Panc1 (cell line): ENCODE measurements at regions of chr6 and their contacts with region 1.

Region 1: DNA sequence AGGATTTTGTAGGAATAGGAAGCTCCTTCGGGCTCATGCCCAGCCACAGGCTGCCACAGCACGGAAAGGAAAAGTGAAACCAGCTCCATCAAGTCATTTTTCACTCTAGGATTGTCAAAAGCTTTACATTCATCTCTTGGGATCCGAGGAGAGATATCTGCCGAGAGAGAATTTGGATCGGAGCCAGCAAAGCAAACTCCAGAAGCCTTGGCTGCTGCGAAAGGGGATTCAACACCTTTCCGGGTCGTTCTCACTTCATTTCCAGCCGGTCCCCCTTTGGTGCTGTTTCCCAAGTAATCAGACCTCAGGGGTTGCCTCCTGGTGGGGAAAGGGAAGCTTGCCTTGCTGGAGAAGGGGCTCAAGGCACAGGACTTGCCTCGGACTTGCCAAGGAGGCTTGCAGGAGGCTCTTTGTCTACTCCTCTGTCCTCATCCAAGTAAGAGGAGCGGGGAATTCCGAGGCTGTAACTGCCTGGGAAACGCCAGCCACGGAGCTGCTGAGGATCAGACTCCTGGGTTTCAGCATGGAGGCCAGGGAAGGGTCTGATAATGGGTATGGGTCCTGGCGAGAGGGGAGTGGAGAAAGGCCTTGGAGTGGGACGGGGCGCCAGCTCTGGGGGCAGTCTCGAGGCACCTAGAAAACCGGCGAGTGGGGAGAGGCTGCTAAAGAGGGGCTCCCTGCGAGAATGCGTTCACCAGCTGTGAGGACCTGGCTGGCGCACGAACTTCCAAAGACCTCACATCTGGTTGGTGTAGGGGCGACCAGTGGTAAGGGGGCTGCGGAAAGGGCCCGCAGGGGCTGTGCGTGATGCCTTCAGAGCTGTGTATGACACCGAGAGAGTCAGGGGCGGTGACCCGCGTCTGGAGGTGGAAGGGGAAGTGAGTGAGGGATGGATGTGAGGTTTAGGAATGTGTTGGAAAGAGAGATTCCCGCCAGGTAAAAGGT is 702 bp downstream of the ETV7 start:
- DNase-seq: peak; percentile 7
- ATAC-seq: peak; percentile 82
- H3K4me3 ChIP-seq: peak overlapping the region; percentile 51 to 81
- H3K27ac ChIP-seq: peak overlapping the region; percentile 86
- H3K4me1 ChIP-seq: no peaks in the 10 kb centered on the region; the same call in 1 of the 2 replicates
- H3K27me3 ChIP-seq: no peaks in the 10 kb centered on the region
- CTCF ChIP-seq: no peak

Region 2: GRCh38 chr6:36350681-36351571 is 35.8 kb before region 1 on chr6:
- CTCF ChIA-PET with region 1: no interaction called
- POLR2A ChIA-PET with region 1: no interaction called
- in situ Hi-C with region 1: no loop called
- intact Hi-C with region 1: no loop called
- DNase-seq: no peak
- ATAC-seq: 0 out of 2 replicates have a peak, but pooled peaks have one; percentile 58
- H3K4me3 ChIP-seq: no peak overlapping the region
- H3K27ac ChIP-seq: no peak overlapping the region
- H3K4me1 ChIP-seq: no peaks in the 10 kb centered on the region
- H3K27me3 ChIP-seq: no peaks in the 10 kb centered on the region; the same call in 1 of the 2 replicates
- CTCF ChIP-seq: no peak

Region 3: DNA sequence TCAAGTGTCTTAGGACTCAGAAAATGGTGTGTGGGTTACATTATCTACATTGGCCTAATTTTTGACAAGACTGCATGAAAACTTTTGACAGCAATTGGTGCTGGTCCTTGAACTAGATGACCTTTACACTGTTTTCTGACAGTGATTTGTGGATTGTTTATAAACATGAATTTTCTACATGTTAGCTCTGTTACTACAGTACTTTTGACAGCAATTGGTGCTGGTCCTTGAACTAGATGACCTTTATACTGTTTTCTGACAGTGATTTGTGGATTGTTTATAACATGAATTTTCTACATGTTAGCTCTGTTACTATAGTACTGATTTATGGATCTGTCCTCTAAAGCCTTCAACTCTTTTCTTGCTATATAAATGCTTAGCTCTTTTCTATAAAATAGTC is 72.7 kb after region 1 on chr6:
- CTCF ChIA-PET with region 1: no interaction called
- POLR2A ChIA-PET with region 1: no interaction called
- in situ Hi-C with region 1: no loop called
- intact Hi-C with region 1: no loop called
- DNase-seq: no peak
- ATAC-seq: no peak
- H3K4me3 ChIP-seq: no peak overlapping the region
- H3K27ac ChIP-seq: no peak overlapping the region
- H3K4me1 ChIP-seq: no peaks in the 10 kb centered on the region
- H3K27me3 ChIP-seq: no peaks in the 10 kb centered on the region
- CTCF ChIP-seq: no peak

Region 4: GRCh38 chr6:36580184-36580526 is 193.4 kb after region 1 on chr6:
- CTCF ChIA-PET with region 1: interaction called, 12 read pairs
- POLR2A ChIA-PET with region 1: no interaction called
- in situ Hi-C with region 1: no loop called
- intact Hi-C with region 1: no loop called
- DNase-seq: no peak
- ATAC-seq: peak; percentile 35; the same call in 1 of the 2 replicates
- H3K4me3 ChIP-seq: peak overlapping the region in 1 of 2 experiments; percentile 18; a peak in 1 of 4 replicates
- H3K27ac ChIP-seq: peak overlapping the region; percentile 26; the same call in 1 of the 2 replicates
- H3K4me1 ChIP-seq: peaks cover 12% of the 10 kb centered on the region
- H3K27me3 ChIP-seq: no peaks in the 10 kb centered on the region
- CTCF ChIP-seq: no peak